Naive thymus-derived CD4-positive, alpha-beta T cell (primary cell): ENCODE measurements at regions of chr2 and their contacts with region 1.

Region 1: DNA sequence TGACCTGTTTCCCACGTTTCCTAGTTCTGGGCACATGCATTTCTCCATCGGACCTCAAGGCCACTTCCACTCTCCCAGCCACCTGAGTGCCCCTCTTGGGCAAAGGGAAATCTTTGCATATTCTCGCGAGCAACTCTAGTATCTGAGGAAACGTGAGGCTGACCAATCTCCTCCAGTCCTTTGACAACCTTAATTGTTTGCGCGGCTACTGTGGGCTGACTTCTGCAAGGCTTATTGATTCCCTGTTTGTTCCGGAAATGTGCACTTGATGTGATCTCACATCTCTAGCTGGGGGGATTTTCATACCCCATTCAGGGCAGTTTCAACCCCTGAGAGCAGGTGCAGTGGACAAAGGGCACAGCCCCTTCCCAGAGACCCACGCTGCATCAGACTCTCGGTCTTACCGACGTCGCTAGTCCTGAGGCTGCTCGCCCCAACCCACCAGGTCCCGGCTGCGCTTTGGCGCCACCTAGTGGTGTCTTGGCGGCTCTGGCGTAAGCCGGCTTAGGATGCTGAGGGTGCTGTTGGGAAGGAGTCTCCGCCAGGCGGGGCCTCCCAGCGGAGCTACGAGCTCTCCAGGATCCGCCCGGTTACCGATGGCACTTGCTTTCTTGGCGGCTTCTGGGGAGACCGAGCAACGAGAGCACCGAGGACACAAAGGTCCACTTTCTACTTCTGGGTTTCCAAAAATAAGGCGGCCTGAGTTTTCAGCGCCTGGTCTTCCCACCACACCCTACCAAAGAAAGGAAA is 24.8 kb upstream of the SPR start:
- DNase-seq: peak; percentile 63 to 91 (median 83)
- ATAC-seq: peak; percentile 97
- H3K4me3 ChIP-seq: no peak overlapping the region
- H3K4me3 Mint-ChIP-seq: peak overlapping the region; percentile 27 to 80 (median 69)
- H3K27ac ChIP-seq: no peak overlapping the region
- H3K27ac Mint-ChIP-seq: peak overlapping the region in 1 of 9 donors; percentile 49
- H3K4me1 ChIP-seq: peaks cover 4% of the 10 kb centered on the region in 2 donors
- H3K4me1 Mint-ChIP-seq: peaks cover 3 to 11% (median 8%) of the 10 kb centered on the region in 7 donors
- H3K27me3 ChIP-seq: peaks cover 4 to 5% of the 10 kb centered on the region in 2 donors
- H3K27me3 Mint-ChIP-seq: peaks cover 29 to 63% (median 61%) of the 10 kb centered on the region in 5 donors

Region 2: GRCh38 chr2:71923887-71924533 is 938.4 kb before region 1 on chr2:
- CTCF ChIA-PET with region 1: no interaction called
- POLR2A ChIA-PET with region 1: no interaction called
- intact Hi-C with region 1: loop called in 1 of 2 experiments (anchors 5 kb)
- DNase-seq: peak in 7 of 9 donors; percentile 28 to 47 (median 36)
- ATAC-seq: peak; percentile 45
- H3K4me3 ChIP-seq: no peak overlapping the region
- H3K4me3 Mint-ChIP-seq: no peak overlapping the region
- H3K27ac ChIP-seq: no peak overlapping the region
- H3K27ac Mint-ChIP-seq: no peak overlapping the region
- H3K4me1 ChIP-seq: no peaks in the 10 kb centered on the region
- H3K4me1 Mint-ChIP-seq: no peaks in the 10 kb centered on the region
- H3K27me3 ChIP-seq: no peaks in the 10 kb centered on the region
- H3K27me3 Mint-ChIP-seq: peaks cover 0 to 3% (median 0%) of the 10 kb centered on the region in 5 donors

Region 3: DNA sequence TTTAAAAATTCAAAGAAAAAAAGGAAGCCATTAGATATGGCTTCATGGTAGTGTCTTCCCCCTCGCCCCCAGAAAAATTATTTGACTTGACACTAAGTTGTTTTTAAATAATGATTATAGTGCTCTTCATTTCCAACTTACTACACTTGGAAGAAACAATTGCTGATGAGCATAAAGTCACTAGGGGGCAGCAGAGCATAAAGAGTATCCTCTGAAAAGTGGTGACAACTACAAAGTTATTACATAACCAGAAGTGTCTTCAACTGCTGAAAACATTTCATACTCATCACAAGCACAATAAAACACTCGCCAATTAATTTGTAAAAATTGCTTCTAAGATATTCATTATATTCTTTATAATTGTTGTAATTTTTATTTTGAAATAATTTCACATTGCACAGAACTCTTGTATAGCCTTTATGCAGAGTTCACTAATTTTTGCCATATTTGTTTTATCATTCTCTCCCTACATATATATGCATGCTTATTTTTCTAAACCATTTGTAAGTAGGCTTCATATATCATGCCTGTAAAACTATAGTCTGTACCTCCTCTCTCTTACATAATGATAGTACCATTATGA is 91.4 kb before region 1 on chr2:
- CTCF ChIA-PET with region 1: interaction called, 22 read pairs
- POLR2A ChIA-PET with region 1: no interaction called
- intact Hi-C with region 1: loop called (anchors 1 to 2 kb)
- DNase-seq: peak in 7 of 9 donors; percentile 46 to 75 (median 74)
- ATAC-seq: peak; percentile 84
- H3K4me3 ChIP-seq: no peak overlapping the region
- H3K4me3 Mint-ChIP-seq: peak overlapping the region in 1 of 10 donors; percentile 4
- H3K27ac ChIP-seq: no peak overlapping the region
- H3K27ac Mint-ChIP-seq: peak overlapping the region in 1 of 9 donors; percentile 41
- H3K4me1 ChIP-seq: no peaks in the 10 kb centered on the region
- H3K4me1 Mint-ChIP-seq: no peaks in the 10 kb centered on the region
- H3K27me3 ChIP-seq: no peaks in the 10 kb centered on the region
- H3K27me3 Mint-ChIP-seq: no peaks in the 10 kb centered on the region

Region 4: GRCh38 chr2:72825241-72826155 is 36.9 kb before region 1 on chr2 and contains the start of gene EXOC6B:
- CTCF ChIA-PET with region 1: interaction called, 6 read pairs
- POLR2A ChIA-PET with region 1: no interaction called
- intact Hi-C with region 1: loop called (anchors 1 to 2 kb)
- DNase-seq: peak; percentile 78 to 87 (median 84)
- ATAC-seq: peak; percentile 96
- H3K4me3 ChIP-seq: peak within 1 kb of the TSS; percentile 70
- H3K4me3 Mint-ChIP-seq: peak within 1 kb of the TSS; percentile 88 to 99 (median 98)
- H3K27ac ChIP-seq: peak within 1 kb of the TSS; percentile 69
- H3K27ac Mint-ChIP-seq: peak within 1 kb of the TSS; percentile 70 to 96 (median 92)
- H3K4me1 ChIP-seq: peaks cover 14 to 19% of the 10 kb centered on the region in 2 donors
- H3K4me1 Mint-ChIP-seq: peaks cover 24 to 48% (median 45%) of the 10 kb centered on the region in 7 donors
- H3K27me3 ChIP-seq: no peaks in the 10 kb centered on the region
- H3K27me3 Mint-ChIP-seq: peaks cover 0 to 12% (median 5%) of the 10 kb centered on the region in 5 donors
- total RNA-seq, gene EXOC6B: 14.3 to 21.9 (median 18.0) TPM

Region 5: DNA sequence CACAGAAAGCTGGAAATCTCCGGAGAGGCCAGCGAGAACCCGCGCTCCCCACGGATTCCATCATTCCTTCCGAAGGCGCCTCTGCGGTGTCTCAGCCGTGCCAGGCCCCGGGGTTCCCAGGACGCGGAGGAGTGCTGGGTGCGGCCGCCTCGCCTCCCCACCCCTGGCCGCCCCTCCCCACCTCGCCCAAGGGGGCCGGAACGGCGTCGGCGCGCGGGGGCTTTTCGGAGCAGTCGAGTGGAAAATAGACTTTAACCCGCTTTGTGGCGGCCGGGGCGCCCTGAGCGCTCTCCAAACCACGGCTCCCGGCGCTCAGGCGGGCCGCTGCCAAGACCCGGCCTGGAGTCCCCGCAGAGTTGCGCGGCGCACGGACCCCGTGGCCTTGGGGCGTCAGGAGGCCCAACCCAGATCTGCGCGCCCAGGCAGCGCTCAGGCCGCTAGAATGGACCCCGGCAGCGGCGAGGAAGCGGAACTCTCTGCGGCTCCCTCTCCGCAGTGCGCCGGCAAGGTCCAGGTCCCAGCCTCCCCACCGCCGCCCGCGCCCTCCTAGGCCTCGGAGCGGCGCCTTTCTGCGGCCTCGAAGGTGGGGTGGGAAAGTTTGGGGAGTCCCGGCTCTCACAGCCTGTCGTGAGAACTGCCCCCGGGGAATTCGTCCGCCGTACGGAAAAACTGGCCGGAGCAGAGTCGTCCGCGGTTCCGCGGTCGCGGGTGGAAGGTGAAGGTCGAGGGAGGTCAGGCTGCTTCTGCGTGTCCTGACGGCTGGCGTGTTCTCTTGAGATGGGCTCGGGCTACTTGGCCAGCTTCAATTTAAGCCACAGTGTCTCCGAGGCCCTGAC is 53.7 kb after region 1 on chr2:
- CTCF ChIA-PET with region 1: no interaction called
- POLR2A ChIA-PET with region 1: no interaction called
- intact Hi-C with region 1: loop called in 1 of 2 experiments (anchors 5 kb)
- DNase-seq: peak in 7 of 9 donors; percentile 27 to 53 (median 41)
- ATAC-seq: peak; percentile 62
- H3K4me3 ChIP-seq: peak overlapping the region; percentile 47
- H3K4me3 Mint-ChIP-seq: peak overlapping the region; percentile 56 to 89 (median 82)
- H3K27ac ChIP-seq: no peak overlapping the region
- H3K27ac Mint-ChIP-seq: no peak overlapping the region
- H3K4me1 ChIP-seq: peaks cover 13 to 31% of the 10 kb centered on the region in 2 donors
- H3K4me1 Mint-ChIP-seq: peaks cover 8 to 32% (median 28%) of the 10 kb centered on the region in 7 donors
- H3K27me3 ChIP-seq: peaks cover 17 to 44% of the 10 kb centered on the region in 2 donors
- H3K27me3 Mint-ChIP-seq: peaks cover 57 to 83% (median 58%) of the 10 kb centered on the region in 5 donors

Region 6: DNA sequence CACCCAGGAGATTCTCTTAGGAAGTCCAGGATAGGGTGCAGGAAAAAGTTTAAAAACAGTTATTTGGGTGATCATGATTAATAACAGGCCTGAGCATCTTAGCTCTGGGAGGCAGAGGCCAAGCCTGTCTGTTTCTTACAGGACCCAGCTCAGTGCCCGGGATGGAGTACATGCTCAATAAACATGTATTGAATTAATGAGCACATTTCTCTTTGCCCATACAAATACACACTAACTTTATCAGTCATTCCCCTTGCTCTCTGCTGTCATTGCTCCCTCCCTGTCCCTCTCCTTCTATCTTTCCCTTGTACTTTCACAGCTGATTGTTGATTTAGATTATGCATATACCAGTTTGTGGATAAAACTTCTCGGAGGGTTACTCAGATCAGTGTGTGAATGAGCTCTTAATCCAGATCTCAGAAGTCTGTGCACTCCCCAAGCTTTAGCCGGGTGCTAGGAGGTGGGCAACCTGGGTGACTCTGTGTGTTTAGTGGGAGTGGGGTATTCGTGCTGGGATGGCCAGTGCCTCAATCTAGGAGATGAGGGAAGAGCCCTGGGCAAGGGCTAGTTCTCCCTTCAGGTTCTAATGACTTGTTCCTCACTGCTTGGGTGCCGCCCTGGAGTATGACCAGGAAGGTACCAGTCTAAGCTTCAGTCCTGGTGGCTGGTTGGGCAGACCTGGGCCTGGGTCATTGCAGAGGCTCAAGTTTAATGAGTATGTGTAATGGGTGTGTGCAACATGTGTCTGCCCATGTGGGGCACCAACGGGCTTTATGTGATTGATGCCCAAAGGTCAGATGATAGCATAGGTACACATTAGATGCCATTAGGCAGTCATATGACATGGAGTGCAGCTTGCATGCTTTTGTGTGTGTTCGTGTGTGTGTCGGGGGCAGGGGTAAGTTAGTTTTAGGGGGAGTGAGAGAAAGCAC is 65.5 kb after region 1 on chr2:
- CTCF ChIA-PET with region 1: no interaction called
- POLR2A ChIA-PET with region 1: no interaction called
- intact Hi-C with region 1: loop called in 1 of 2 experiments (anchors 2 kb)
- DNase-seq: peak in 1 of 9 donors; percentile 0
- ATAC-seq: no peak
- H3K4me3 ChIP-seq: no peak overlapping the region
- H3K4me3 Mint-ChIP-seq: no peak overlapping the region
- H3K27ac ChIP-seq: no peak overlapping the region
- H3K27ac Mint-ChIP-seq: no peak overlapping the region
- H3K4me1 ChIP-seq: no peaks in the 10 kb centered on the region
- H3K4me1 Mint-ChIP-seq: peaks cover 0 to 9% (median 5%) of the 10 kb centered on the region in 7 donors
- H3K27me3 ChIP-seq: peaks cover 0 to 14% of the 10 kb centered on the region in 2 donors
- H3K27me3 Mint-ChIP-seq: peaks cover 6 to 25% (median 12%) of the 10 kb centered on the region in 5 donors

Region 7: DNA sequence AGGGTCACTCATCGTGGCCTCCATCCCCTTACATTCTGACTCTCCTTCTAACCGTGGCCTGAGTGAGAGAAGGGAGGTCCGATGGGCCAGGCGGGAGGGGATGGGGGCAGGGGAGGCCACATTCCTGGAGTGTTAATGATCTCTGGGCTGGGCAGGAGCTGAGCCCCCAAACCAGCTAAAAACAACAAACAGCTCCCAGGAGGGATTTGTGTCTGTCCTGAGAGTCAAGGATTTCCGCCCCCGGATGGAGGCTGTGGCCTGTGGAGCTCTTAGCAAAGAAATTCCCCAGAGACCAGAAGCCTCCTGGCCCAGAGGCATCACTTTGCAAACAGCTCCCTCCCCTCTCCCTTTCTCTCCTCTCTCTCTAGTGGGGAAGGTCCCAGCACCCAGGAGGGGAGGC is 78.4 kb after region 1 on chr2:
- CTCF ChIA-PET with region 1: no interaction called
- POLR2A ChIA-PET with region 1: no interaction called
- intact Hi-C with region 1: no loop called
- DNase-seq: no peak
- ATAC-seq: no peak
- H3K4me3 ChIP-seq: no peak overlapping the region
- H3K4me3 Mint-ChIP-seq: no peak overlapping the region
- H3K27ac ChIP-seq: no peak overlapping the region
- H3K27ac Mint-ChIP-seq: no peak overlapping the region
- H3K4me1 ChIP-seq: no peaks in the 10 kb centered on the region
- H3K4me1 Mint-ChIP-seq: no peaks in the 10 kb centered on the region
- H3K27me3 ChIP-seq: no peaks in the 10 kb centered on the region
- H3K27me3 Mint-ChIP-seq: peaks cover 0 to 7% (median 6%) of the 10 kb centered on the region in 5 donors

Region 8: GRCh38 chr2:73185965-73186364 is 323.6 kb after region 1 on chr2:
- CTCF ChIA-PET with region 1: no interaction called
- POLR2A ChIA-PET with region 1: no interaction called
- intact Hi-C with region 1: no loop called
- DNase-seq: no peak
- ATAC-seq: no peak
- H3K4me3 ChIP-seq: no peak overlapping the region
- H3K4me3 Mint-ChIP-seq: no peak overlapping the region
- H3K27ac ChIP-seq: no peak overlapping the region
- H3K27ac Mint-ChIP-seq: no peak overlapping the region
- H3K4me1 ChIP-seq: no peaks in the 10 kb centered on the region
- H3K4me1 Mint-ChIP-seq: peaks cover 0 to 6% (median 0%) of the 10 kb centered on the region in 7 donors
- H3K27me3 ChIP-seq: no peaks in the 10 kb centered on the region
- H3K27me3 Mint-ChIP-seq: peaks cover 5 to 36% (median 9%) of the 10 kb centered on the region in 5 donors

Region 9: DNA sequence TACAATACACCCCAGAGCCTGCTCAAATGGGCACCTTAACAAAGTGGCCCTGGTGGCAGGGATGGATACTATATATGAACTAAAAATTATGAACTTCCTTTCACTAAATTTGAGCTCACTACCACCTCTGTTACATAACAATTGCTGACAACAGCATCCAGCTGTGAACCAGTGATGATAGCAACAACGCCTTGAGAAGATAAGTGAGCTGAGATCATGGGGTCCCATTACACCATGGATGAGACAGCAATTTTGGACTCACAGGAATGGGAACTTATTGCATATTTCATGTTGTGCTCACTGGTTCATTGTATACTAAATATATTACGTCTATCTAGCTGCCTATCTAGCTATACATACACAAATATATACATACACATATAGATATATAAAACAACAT is 506.4 kb after region 1 on chr2:
- CTCF ChIA-PET with region 1: no interaction called
- POLR2A ChIA-PET with region 1: no interaction called
- intact Hi-C with region 1: no loop called
- DNase-seq: no peak
- ATAC-seq: no peak
- H3K4me3 ChIP-seq: no peak overlapping the region
- H3K4me3 Mint-ChIP-seq: no peak overlapping the region
- H3K27ac ChIP-seq: no peak overlapping the region
- H3K27ac Mint-ChIP-seq: no peak overlapping the region
- H3K4me1 ChIP-seq: no peaks in the 10 kb centered on the region
- H3K4me1 Mint-ChIP-seq: no peaks in the 10 kb centered on the region
- H3K27me3 ChIP-seq: no peaks in the 10 kb centered on the region
- H3K27me3 Mint-ChIP-seq: peaks cover 4 to 24% (median 11%) of the 10 kb centered on the region in 5 donors